ENCODE measurements at regions of chr19 and their contacts with region 1.

Region 1: GRCh38 chr19:36772311-36773222 is at the start of gene ZNF850:
- DNase-seq: peak; percentile 97
- H3K4me3 Mint-ChIP-seq: peak within 1 kb of the TSS; percentile 98
- H3K27ac Mint-ChIP-seq: peak within 1 kb of the TSS; percentile 90
- H3K4me1 Mint-ChIP-seq: peaks cover 21% of the 10 kb centered on the region
- H3K27me3 Mint-ChIP-seq: peaks cover 2% of the 10 kb centered on the region
- total RNA-seq, gene ZNF850: 11.2 to 11.3 TPM

Region 2: GRCh38 chr19:36378625-36379509 is 393.7 kb before region 1 on chr19 and contains the start of gene ZFP14:
- CTCF ChIA-PET with region 1: no interaction called
- intact Hi-C with region 1: loop called (anchors 2 kb)
- DNase-seq: peak; percentile 96
- H3K4me3 Mint-ChIP-seq: peak within 1 kb of the TSS; percentile 90
- H3K27ac Mint-ChIP-seq: peak within 1 kb of the TSS; percentile 84
- H3K4me1 Mint-ChIP-seq: peaks cover 10% of the 10 kb centered on the region
- H3K27me3 Mint-ChIP-seq: no peaks in the 10 kb centered on the region
- total RNA-seq, gene ZFP14: 2.2 to 3.1 TPM

Region 3: GRCh38 chr19:36638862-36639510 is 133.6 kb before region 1 on chr19:
- CTCF ChIA-PET with region 1: no interaction called
- intact Hi-C with region 1: no loop called
- DNase-seq: no peak
- H3K4me3 Mint-ChIP-seq: no peak overlapping the region
- H3K27ac Mint-ChIP-seq: no peak overlapping the region
- H3K4me1 Mint-ChIP-seq: no peaks in the 10 kb centered on the region
- H3K27me3 Mint-ChIP-seq: no peaks in the 10 kb centered on the region

Region 4: DNA sequence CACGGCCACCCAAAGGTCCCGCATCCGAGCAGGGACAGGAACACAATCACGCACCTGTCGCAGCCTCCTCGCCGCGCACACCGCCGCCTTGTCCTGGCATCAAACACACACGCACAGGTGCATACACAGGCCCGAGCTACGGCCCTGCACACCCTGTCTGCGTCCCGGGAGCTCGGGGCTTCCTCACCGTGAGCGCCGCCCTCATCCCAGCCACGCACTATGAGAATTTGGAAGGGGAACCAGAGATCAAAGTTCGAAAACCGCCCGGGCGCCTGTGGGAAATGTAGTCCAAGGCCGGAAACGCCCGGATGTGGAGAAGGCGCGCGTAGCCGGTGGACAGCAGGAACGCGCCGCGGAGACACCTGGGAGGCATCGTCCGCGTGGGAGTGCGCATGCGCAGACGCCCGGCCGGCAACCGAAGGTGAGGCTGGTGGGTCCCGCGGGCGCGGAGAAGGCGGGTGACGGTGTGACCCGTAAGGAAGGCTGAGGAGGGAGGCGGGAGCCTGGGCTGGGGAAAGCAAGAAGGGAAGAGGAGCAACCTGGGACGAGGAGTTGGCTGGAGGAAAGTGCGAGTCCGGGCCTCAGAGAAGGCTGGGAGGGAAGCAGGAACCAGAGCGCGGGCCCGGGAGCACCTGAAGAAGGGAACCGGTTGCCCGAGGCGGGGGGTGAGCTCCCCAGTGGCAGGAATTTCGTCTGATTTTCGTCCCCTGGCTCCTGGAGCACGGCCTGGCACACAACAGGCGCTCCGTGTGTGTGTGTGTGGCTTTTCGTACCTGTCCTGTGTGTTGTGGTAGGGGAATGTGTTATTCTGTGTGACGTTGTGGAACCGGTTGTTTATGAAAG is 85.1 kb before region 1 on chr19 and contains the start of gene ZNF567:
- CTCF ChIA-PET with region 1: no interaction called
- intact Hi-C with region 1: loop called (anchors 5 kb)
- DNase-seq: peak; percentile 98
- H3K4me3 Mint-ChIP-seq: peak within 1 kb of the TSS; percentile 88
- H3K27ac Mint-ChIP-seq: peak within 1 kb of the TSS; percentile 90
- H3K4me1 Mint-ChIP-seq: peaks cover 26% of the 10 kb centered on the region
- H3K27me3 Mint-ChIP-seq: no peaks in the 10 kb centered on the region
- total RNA-seq, gene ZNF567: 6.0 to 6.8 TPM

Region 5: DNA sequence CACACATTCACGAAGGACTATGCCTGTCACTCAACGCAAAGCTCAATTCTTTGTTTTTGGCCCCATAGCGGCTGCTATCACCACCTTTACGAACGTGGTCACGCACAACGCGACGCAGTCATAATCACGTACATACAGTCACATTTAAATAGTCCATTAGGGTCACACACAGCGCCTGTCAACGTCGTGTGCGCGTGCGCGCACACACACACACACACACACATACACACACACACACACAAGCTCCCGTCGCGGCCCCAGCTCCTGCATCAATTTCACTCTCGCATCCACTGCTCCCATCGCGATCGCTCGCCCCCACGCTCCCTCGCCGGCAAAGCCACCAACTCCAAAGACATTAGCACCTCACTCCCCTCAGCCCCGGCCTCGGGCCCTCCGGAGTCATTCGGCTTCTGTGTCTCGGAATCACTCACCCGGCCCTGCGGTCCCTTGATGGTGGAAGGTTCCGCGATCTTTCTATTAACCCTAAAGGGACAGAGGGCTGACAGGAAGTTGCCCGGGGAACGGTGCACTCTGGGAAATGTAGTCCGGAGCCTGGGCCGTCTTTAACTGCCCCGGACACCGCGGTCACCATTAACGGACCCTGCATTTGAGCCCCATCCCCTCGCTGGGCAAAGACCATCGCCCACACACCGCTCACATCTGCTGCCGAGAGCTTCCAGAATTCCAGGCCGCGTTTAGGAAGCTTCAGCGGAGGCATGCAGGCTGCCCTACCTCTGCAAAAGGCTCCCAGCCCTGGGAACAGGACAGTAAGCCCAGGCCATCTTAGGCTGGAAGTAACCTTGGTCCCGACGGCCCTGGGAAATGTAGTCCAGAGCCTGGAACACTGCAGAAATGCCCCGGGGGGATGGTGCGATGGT is 65.6 kb after region 1 on chr19 and contains the start of gene ZNF790:
- CTCF ChIA-PET with region 1: no interaction called
- intact Hi-C with region 1: loop called (anchors 2 kb)
- DNase-seq: peak; percentile 92
- H3K4me3 Mint-ChIP-seq: no peak within 1 kb of the TSS
- H3K27ac Mint-ChIP-seq: peak within 1 kb of the TSS; percentile 54
- H3K4me1 Mint-ChIP-seq: peaks cover 7% of the 10 kb centered on the region
- H3K27me3 Mint-ChIP-seq: no peaks in the 10 kb centered on the region
- total RNA-seq, gene ZNF790: 4.9 to 5.2 TPM

Measured in activated naive CD4-positive, alpha-beta T cell treated with anti-CD3 and anti-CD28 coated beads for 36 hours (primary cell).